ENCODE measurements at regions of chrX and their contacts with region 1.

Region 1: DNA sequence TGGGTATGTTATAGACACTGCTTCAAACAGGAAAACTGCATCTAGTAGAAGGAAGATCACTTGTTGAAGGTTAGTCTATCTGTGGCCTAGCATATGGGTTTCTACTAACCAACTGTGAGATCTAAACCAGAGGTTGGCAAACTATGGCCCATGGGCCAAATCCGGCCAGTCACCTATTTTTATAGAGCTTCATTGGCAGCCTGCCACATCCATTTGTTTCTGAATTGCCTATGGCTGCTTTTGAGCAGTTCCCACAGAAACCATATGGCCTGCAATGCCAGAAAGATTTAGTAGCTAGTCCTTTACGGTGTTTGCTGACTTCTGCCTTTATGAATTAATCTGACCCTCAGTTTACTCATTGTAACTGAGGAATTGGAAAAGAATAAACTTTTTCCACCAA is 71.1 kb downstream of the MID1 start:
- DNase-seq: no peak
- ATAC-seq: no peak
- H3K4me3 Mint-ChIP-seq: no peak overlapping the region
- H3K27ac Mint-ChIP-seq: no peak overlapping the region
- H3K4me1 Mint-ChIP-seq: peaks cover 58% of the 10 kb centered on the region
- H3K27me3 Mint-ChIP-seq: no peaks in the 10 kb centered on the region
- CTCF ChIP-seq: no peak

Region 2: GRCh38 chrX:10579112-10580011 is 30.1 kb after region 1 on chrX:
- CTCF ChIA-PET with region 1: no interaction called
- POLR2A ChIA-PET with region 1: interaction called, 10 read pairs
- DNase-seq: no peak
- ATAC-seq: no peak
- H3K4me3 Mint-ChIP-seq: 0 out of 2 replicates have a peak overlapping the region, but pooled peaks have one; percentile 4
- H3K27ac Mint-ChIP-seq: peak overlapping the region; percentile 57
- H3K4me1 Mint-ChIP-seq: peaks cover 46% of the 10 kb centered on the region
- H3K27me3 Mint-ChIP-seq: no peaks in the 10 kb centered on the region
- CTCF ChIP-seq: no peak

Region 3: GRCh38 chrX:10709276-10709675 is 160.0 kb after region 1 on chrX:
- CTCF ChIA-PET with region 1: no interaction called
- POLR2A ChIA-PET with region 1: no interaction called
- DNase-seq: no peak
- ATAC-seq: no peak
- H3K4me3 Mint-ChIP-seq: no peak overlapping the region
- H3K27ac Mint-ChIP-seq: no peak overlapping the region
- H3K4me1 Mint-ChIP-seq: peaks cover 31% of the 10 kb centered on the region
- H3K27me3 Mint-ChIP-seq: 0 out of 2 replicates have a peak, but pooled peaks cover 1% of the 10 kb centered on the region
- CTCF ChIP-seq: no peak